WTC11 (cell line): ENCODE measurements at regions of chr19 and their contacts with region 1.

Region 1: GRCh38 chr19:10353793-10354391 is 14.5 kb upstream of the ICAM3 start:
- DNase-seq: peak; percentile 100
- ATAC-seq: peak; percentile 69
- H3K4me3 Mint-ChIP-seq: peak overlapping the region; percentile 84
- H3K27ac Mint-ChIP-seq: peak overlapping the region; percentile 94
- H3K4me1 Mint-ChIP-seq: peaks cover 14% of the 10 kb centered on the region
- H3K27me3 Mint-ChIP-seq: no peaks in the 10 kb centered on the region
- CTCF ChIP-seq: no peak

Region 2: DNA sequence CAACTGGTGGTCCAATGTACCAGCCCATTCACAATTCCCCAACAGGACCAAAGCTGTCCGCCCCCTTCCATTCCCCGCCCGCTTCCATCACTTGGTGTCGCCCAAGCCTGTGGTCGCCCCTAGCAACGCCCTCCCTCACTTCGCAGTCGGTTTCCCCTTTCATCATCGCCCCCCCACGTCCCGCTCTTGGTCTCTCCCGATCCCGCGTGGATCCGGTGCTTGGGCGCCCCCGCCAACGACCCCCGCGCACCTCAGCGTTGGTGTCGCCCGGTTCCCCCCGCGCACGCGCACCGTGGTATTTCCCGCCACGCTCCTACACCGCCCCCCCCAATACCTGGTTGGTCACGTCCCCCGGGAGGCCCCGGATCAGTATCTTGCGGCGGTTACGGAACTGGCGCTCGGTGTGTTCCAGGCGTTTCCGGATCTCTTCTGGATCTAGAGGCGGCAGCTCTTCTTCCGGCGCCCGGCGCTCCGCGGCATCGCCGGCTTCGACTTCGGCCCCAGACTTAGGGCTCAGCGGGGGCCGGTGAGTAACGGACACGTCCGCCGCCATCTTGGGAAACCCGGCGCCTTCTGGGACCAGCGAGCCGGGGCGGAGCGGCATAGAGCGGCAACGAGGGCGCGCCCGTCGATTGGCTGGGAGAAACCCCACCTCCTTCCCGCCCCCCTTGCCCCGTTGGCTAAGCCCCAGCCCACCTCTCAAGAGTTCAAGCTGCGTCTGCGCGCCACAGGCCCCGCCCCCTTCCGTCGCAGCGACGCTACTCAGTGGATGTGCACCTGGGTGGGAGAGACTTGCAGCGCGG is 20.7 kb before region 1 on chr19 and contains the start of gene RAVER1:
- CTCF ChIA-PET with region 1: interaction called, 24 read pairs
- POLR2A ChIA-PET with region 1: interaction called, 18 read pairs
- DNase-seq: peak; percentile 98
- ATAC-seq: peak; percentile 91
- H3K4me3 Mint-ChIP-seq: peak within 1 kb of the TSS; percentile 93
- H3K27ac Mint-ChIP-seq: peak within 1 kb of the TSS; percentile 90
- H3K4me1 Mint-ChIP-seq: peaks cover 16% of the 10 kb centered on the region
- H3K27me3 Mint-ChIP-seq: peaks cover 10% of the 10 kb centered on the region
- CTCF ChIP-seq: no peak
- total RNA-seq, gene RAVER1: 85.8 to 87.4 TPM (median 86.9 TPM) in 3 replicates

Region 3: GRCh38 chr19:10380313-10381102 is 26.6 kb after region 1 on chr19 and contains the start of gene TYK2:
- CTCF ChIA-PET with region 1: interaction called, 5 read pairs
- POLR2A ChIA-PET with region 1: interaction called, 10 read pairs
- DNase-seq: peak; percentile 93
- ATAC-seq: peak; percentile 96
- H3K4me3 Mint-ChIP-seq: peak within 1 kb of the TSS; percentile 88
- H3K27ac Mint-ChIP-seq: peak within 1 kb of the TSS; percentile 97
- H3K4me1 Mint-ChIP-seq: peaks cover 9% of the 10 kb centered on the region
- H3K27me3 Mint-ChIP-seq: peaks cover 3% of the 10 kb centered on the region; the same call in 1 of the 2 replicates
- CTCF ChIP-seq: no peak
- total RNA-seq, gene TYK2: 63.8 to 66.4 TPM (median 65.1 TPM) in 3 replicates